Activated CD4-positive, alpha-beta memory T cell treated with anti-CD3 and anti-CD28 coated beads for 36 hours (primary cell): ENCODE measurements at regions of chr12 and their contacts with region 1.

Region 1: GRCh38 chr12:69359531-69360347 is at the start of gene YEATS4:
- DNase-seq: peak; percentile 95
- H3K4me3 Mint-ChIP-seq: peak within 1 kb of the TSS; percentile 76
- H3K27ac Mint-ChIP-seq: peak within 1 kb of the TSS; percentile 94
- H3K4me1 Mint-ChIP-seq: peaks cover 32% of the 10 kb centered on the region
- H3K27me3 Mint-ChIP-seq: no peaks in the 10 kb centered on the region
- total RNA-seq, gene YEATS4: 50.4 to 50.6 TPM

Region 2: DNA sequence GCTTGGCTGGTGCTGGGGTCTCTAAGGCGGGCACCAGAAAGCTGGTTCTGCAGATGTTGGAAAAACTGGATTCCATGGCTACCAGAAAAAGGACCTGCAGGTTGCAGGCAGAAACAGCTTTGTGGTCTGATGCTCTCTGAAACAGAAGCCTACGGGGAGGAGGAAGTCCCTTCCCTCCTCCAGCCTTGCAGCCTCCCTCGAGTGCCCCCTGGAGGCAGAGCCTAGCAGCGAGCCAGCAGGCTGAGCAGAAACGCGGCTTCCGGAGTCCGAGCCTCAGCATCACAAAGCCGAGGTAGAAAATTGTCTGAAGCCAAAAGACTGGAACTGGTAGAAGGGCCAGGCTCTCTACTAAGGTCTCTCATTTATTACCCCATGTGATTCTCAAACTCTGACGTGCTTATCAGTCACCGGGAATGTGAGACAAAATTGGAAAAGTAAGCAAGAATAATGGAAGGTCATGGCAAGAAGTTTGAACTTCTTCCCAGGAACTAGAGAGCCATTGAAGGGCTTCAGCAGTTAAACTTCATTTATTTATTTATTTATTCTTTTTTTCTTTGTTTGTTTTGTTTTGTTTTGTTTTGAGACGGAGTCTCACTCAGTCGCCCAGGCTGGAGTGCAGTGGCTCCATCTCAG is 202.6 kb before region 1 on chr12:
- CTCF ChIA-PET with region 1: interaction called, 9 read pairs
- POLR2A ChIA-PET with region 1: no interaction called
- intact Hi-C with region 1: loop called (anchors 1 kb)
- DNase-seq: peak; percentile 95
- H3K4me3 Mint-ChIP-seq: peak overlapping the region; percentile 52
- H3K27ac Mint-ChIP-seq: no peak overlapping the region
- H3K4me1 Mint-ChIP-seq: peaks cover 39% of the 10 kb centered on the region
- H3K27me3 Mint-ChIP-seq: no peaks in the 10 kb centered on the region

Region 3: DNA sequence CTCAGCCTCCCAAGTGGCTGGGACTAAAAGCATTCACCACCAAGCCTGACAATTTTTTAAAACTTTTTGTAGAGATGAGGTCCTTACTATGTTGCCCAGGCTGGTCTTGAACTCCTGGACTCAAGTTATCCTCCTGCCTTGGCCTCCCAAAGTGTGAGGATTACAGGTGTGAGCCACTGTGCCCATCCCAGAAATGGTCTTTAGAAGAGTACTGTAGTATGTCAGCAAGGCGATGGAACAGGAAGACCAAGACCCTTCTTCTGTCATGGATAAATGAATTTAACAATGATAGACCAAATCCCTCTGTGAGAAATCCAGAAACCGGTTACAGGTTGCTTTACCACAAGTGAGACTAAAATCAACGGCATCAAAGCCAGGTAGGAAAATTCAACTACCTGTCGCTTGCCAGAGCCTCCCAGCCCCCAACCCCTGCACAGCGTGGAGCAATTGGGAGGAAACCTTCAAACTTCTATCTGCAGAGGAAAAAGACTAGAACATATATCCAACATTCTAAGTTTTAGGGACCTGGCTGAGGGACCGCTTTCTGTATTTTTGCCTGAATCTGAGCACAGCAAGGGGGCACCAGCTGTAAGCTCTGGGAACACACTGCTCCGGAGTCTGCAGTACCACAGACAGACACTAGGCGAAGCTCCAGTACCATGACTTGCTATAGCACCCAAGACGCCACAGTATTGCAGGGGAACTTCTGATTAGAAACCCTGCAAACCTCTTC is 69.0 kb before region 1 on chr12:
- CTCF ChIA-PET with region 1: interaction called, 12 read pairs
- POLR2A ChIA-PET with region 1: no interaction called
- intact Hi-C with region 1: loop called (anchors 5 kb)
- DNase-seq: peak; percentile 87
- H3K4me3 Mint-ChIP-seq: no peak overlapping the region
- H3K27ac Mint-ChIP-seq: no peak overlapping the region
- H3K4me1 Mint-ChIP-seq: peaks cover 7% of the 10 kb centered on the region
- H3K27me3 Mint-ChIP-seq: peaks cover 15% of the 10 kb centered on the region

Region 4: GRCh38 chr12:69470189-69471075 is 110.7 kb after region 1 on chr12 and contains the start of gene FRS2:
- CTCF ChIA-PET with region 1: interaction called, 3 read pairs
- POLR2A ChIA-PET with region 1: interaction called, 10 read pairs
- intact Hi-C with region 1: loop called (anchors 1 kb)
- DNase-seq: peak; percentile 92
- H3K4me3 Mint-ChIP-seq: peak within 1 kb of the TSS; percentile 98
- H3K27ac Mint-ChIP-seq: peak within 1 kb of the TSS; percentile 93
- H3K4me1 Mint-ChIP-seq: peaks cover 41% of the 10 kb centered on the region
- H3K27me3 Mint-ChIP-seq: no peaks in the 10 kb centered on the region
- total RNA-seq, gene FRS2: 8.6 to 9.5 TPM

Region 5: DNA sequence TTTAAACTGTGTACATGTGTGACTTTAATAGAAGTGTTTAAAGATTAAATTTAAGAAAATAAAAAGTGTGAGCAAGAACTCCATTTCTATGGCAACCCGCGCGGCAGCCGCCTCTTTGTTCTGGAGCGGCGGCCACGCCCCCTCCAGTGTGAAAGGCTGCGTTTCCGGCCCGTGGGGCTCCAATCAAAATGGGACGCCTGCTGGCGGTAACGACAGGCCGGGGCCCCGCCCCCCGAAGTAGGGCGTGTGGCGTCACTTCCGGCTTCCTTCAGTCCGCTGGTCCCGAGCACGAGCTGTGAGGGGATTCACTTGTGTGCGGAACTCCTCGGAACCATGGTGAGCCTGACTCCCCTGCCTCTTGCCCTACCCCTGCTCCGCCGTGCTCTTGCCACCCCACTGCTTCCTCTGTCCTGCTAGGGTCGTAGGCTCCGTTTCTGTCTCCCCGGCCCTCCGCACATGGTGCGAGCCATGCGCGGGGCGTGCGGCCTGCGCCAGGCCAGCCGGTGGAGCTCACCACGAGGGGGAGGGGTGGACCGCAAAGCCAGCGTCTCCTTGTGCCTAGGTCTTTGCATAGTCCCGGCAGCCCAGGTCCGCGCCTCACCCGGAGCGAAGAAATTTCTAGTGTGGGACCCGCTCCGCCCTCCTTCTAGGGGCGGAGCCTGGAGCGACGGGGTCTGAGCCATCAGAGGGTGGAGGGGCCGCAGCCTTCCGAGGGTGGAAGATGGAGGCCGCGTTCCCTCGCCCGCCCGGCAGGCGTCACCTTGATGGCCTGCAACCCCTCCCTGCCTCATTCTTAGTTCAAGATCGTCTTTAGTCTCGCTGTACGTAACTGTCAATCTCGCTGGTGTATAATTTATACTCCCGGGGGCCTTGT is 225.7 kb after region 1 on chr12 and contains the start of gene CCT2:
- CTCF ChIA-PET with region 1: interaction called, 9 read pairs
- POLR2A ChIA-PET with region 1: no interaction called
- intact Hi-C with region 1: loop called (anchors 1 kb)
- DNase-seq: peak; percentile 97
- H3K4me3 Mint-ChIP-seq: peak within 1 kb of the TSS; percentile 83
- H3K27ac Mint-ChIP-seq: peak within 1 kb of the TSS; percentile 90
- H3K4me1 Mint-ChIP-seq: peaks cover 31% of the 10 kb centered on the region
- H3K27me3 Mint-ChIP-seq: no peaks in the 10 kb centered on the region
- total RNA-seq, gene CCT2: 264 to 267 TPM

Region 6: DNA sequence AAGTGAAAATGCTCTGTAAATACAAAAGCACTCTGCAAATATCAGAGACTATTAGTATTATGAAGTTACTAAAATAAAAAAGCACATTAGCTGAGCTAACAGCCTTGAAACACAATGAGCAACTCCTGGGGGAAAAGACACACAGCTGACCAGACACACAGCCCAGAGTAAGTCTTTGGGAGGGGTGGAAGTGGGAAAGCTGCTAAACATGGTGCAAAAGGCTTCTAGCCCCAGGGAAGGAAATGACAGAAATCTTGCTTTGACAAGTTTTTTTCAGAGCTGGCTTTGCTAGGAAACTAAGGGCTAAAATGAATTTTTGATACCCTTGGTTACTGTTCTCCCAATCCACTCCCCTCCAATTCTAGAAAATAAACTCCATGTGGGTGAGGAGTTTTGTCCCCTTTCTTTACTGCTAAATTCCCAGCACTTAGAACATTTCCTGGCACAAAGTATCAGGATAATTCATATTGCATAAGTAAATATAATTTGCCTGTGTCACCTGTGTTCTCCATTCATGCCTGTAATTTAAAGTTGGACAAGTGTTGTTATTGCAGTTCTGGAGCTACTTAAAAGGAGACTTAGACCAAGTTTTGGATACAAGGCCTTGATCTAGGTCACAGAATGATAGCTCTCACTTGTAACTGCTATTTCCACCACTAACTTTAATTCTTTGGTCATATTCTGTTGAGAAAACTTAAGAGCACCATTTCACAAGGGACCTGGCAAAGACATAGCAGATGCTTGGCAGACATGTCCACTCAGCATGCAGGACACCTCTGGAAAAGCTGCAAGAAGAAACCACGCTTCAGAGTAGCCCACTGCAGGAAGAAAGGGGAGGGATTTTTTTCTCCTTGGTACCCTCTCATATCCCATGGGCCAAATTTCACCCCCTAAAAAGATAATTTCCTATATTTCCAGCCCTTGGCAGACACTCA is 359.9 kb after region 1 on chr12:
- CTCF ChIA-PET with region 1: no interaction called
- POLR2A ChIA-PET with region 1: no interaction called
- intact Hi-C with region 1: no loop called
- DNase-seq: no peak
- H3K4me3 Mint-ChIP-seq: no peak overlapping the region
- H3K27ac Mint-ChIP-seq: no peak overlapping the region
- H3K4me1 Mint-ChIP-seq: no peaks in the 10 kb centered on the region
- H3K27me3 Mint-ChIP-seq: peaks cover 12% of the 10 kb centered on the region

Region 7: GRCh38 chr12:69738351-69739286 is 378.9 kb after region 1 on chr12 and contains the start of gene RAB3IP:
- CTCF ChIA-PET with region 1: interaction called, 3 read pairs
- POLR2A ChIA-PET with region 1: no interaction called
- intact Hi-C with region 1: loop called (anchors 1 kb)
- DNase-seq: peak; percentile 95
- H3K4me3 Mint-ChIP-seq: peak within 1 kb of the TSS; percentile 90
- H3K27ac Mint-ChIP-seq: peak within 1 kb of the TSS; percentile 84
- H3K4me1 Mint-ChIP-seq: peaks cover 24% of the 10 kb centered on the region
- H3K27me3 Mint-ChIP-seq: peaks cover 1% of the 10 kb centered on the region
- total RNA-seq, gene RAB3IP: 30.3 to 34.0 TPM

Region 8: DNA sequence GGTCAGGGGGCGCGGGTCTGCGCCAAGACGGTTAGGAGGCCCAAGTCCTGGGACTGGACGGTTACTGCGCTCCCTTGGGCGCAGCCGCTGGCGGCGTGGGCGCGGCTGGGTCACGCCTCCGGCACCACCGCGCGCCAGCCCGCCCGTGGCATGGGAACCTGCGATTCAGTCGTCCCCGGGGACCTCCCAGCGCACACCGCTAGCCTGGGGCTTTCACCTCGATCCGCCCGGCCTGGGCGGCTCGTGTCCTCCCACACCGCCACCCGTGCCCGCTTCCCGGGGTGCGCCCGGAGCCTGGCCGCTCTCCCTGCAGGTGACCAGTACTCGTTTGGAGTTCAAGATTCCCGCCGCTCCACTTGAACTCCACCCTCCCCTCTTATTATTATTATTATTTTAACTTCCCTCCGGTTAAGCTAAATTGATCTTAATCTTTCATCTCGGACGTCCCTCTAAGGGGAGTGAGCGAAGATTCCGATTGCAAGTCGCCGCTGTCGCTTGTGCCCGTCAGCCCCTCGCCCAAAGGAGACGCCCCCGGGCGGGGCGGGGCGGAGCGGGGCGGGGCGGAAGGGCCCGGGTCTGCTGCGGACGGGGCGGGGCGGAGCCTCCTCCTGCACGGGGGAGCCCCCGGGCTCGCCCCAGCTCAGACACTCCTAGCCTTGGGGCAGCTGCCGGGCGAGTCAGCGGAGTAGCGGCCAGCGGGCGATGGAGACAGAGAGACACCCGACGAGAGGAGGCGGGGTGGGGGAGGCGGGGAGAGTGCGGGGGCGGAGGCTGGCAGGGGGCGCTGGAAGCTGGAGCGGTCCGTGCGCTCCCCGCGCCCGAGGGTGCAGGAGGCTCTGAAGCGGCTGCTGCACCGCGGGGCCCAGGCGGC is 1006.1 kb after region 1 on chr12 and contains the start of gene KCNMB4:
- CTCF ChIA-PET with region 1: no interaction called
- POLR2A ChIA-PET with region 1: no interaction called
- intact Hi-C with region 1: loop called (anchors 2 kb)
- DNase-seq: peak; percentile 83
- H3K4me3 Mint-ChIP-seq: peak within 1 kb of the TSS; percentile 90
- H3K27ac Mint-ChIP-seq: peak within 1 kb of the TSS; percentile 51
- H3K4me1 Mint-ChIP-seq: peaks cover 18% of the 10 kb centered on the region
- H3K27me3 Mint-ChIP-seq: peaks cover 5% of the 10 kb centered on the region
- total RNA-seq, gene KCNMB4: 1.3 to 1.5 TPM